Activated B cell treated with CpG ODN at 0.5 μM for 24 hours (primary cell): ENCODE measurements at regions of chr7 and their contacts with region 1.

Region 1: DNA sequence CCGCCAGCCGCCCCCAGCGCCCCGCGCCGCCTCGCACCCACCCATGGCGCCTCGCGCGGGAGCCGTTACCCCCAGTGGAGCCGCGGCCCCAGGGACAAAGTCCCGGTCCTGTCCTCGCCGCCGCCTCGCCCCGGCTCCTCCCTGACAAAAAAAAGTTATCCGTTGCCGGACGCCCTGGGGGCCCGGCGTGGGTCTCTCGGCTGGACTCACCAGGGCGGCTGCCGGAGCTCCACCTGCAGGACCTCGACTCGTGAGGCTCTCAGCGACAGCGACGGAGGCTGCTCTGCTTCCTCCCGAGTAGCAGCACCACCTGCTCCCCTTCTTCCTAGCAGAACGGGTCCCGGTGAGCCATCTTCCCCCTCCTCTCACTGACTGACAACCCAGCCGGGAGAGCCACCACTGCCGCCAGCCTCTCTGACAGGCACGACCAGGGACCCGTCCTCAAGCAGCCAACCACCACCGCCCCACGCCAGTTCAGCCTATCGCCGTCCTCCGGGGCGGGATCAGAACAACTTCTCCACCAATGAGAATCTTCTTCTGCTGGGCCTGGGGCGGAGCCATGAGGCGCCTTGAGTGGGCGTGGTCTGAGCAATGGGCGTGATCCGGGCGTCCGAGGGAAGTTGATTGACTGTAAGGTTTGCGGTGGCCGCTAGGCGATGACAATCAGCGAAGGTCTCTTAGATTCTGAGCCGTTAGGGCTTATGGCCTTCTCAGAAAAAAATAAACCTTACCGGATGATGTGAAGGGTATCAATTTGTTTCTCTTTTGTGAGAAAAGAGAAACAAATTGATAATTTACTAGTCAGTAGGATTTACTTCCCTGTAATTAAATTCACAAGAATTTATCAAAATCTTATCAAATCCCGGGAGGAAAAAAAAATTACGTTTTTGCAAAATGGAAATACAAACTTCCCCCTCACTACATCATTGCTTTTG is at the start of gene HYCC1:
- DNase-seq: peak; percentile 95
- ATAC-seq: peak; percentile 96
- H3K4me3 Mint-ChIP-seq: peak within 1 kb of the TSS; percentile 99
- H3K27ac Mint-ChIP-seq: peak within 1 kb of the TSS; percentile 93
- H3K4me1 Mint-ChIP-seq: peaks cover 44% of the 10 kb centered on the region
- H3K27me3 Mint-ChIP-seq: no peaks in the 10 kb centered on the region
- CTCF ChIP-seq: no peak
- total RNA-seq, gene HYCC1: 39.9 and 41.9 TPM in 2 replicates

Region 2: DNA sequence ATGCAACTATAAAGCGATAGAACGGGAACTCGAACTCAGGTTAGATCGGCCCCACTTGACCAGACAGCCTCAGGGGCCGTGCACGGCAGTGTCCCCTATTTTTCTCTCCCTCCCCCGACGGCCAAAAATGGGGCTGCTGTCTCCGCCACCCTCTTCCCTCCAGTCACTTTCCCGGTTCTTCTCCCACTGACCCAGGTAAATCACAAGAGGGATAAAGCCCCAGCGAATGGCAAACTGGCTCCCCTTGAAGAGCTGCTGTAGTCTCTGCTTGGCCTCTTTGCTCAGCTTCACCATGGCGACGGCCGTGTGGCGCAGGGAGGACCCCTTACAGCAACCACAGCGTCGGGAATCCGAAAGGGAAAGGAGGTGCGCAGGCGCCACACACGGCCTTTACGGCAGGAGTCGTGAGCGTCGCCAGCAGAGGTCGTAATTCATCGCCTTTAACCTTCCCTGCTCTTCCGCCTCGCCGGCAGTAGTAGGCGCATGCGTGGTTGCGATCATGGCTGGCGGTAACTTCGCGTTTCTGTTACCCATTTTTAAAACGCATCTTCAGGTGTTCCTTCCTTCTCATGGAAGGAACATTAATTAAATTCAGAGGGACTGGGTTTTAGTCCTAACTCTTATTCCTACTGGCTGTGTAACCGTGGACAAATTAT is 191.4 kb before region 1 on chr7 and contains the start of gene TOMM7:
- CTCF ChIA-PET with region 1: no interaction called
- POLR2A ChIA-PET with region 1: no interaction called
- intact Hi-C with region 1: loop called (anchors 2 kb)
- DNase-seq: peak; percentile 66
- ATAC-seq: peak; percentile 99
- H3K4me3 Mint-ChIP-seq: peak within 1 kb of the TSS; percentile 99
- H3K27ac Mint-ChIP-seq: peak within 1 kb of the TSS; percentile 91
- H3K4me1 Mint-ChIP-seq: peaks cover 39% of the 10 kb centered on the region
- H3K27me3 Mint-ChIP-seq: peaks cover 11% of the 10 kb centered on the region
- CTCF ChIP-seq: no peak
- total RNA-seq, gene TOMM7: 324 and 406 TPM in 2 replicates

Region 3: GRCh38 chr7:22872096-22872807 is 141.7 kb before region 1 on chr7:
- CTCF ChIA-PET with region 1: no interaction called
- POLR2A ChIA-PET with region 1: no interaction called
- intact Hi-C with region 1: loop called (anchors 5 kb)
- DNase-seq: peak; percentile 21
- ATAC-seq: peak; percentile 94
- H3K4me3 Mint-ChIP-seq: peak overlapping the region; percentile 77
- H3K27ac Mint-ChIP-seq: peak overlapping the region; percentile 32
- H3K4me1 Mint-ChIP-seq: peaks cover 35% of the 10 kb centered on the region
- H3K27me3 Mint-ChIP-seq: no peaks in the 10 kb centered on the region
- CTCF ChIP-seq: no peak

Region 4: GRCh38 chr7:22911889-22912288 is 102.1 kb before region 1 on chr7:
- CTCF ChIA-PET with region 1: no interaction called
- POLR2A ChIA-PET with region 1: no interaction called
- intact Hi-C with region 1: no loop called
- DNase-seq: no peak
- ATAC-seq: no peak
- H3K4me3 Mint-ChIP-seq: no peak overlapping the region
- H3K27ac Mint-ChIP-seq: no peak overlapping the region
- H3K4me1 Mint-ChIP-seq: no peaks in the 10 kb centered on the region
- H3K27me3 Mint-ChIP-seq: no peaks in the 10 kb centered on the region
- CTCF ChIP-seq: no peak

Region 5: DNA sequence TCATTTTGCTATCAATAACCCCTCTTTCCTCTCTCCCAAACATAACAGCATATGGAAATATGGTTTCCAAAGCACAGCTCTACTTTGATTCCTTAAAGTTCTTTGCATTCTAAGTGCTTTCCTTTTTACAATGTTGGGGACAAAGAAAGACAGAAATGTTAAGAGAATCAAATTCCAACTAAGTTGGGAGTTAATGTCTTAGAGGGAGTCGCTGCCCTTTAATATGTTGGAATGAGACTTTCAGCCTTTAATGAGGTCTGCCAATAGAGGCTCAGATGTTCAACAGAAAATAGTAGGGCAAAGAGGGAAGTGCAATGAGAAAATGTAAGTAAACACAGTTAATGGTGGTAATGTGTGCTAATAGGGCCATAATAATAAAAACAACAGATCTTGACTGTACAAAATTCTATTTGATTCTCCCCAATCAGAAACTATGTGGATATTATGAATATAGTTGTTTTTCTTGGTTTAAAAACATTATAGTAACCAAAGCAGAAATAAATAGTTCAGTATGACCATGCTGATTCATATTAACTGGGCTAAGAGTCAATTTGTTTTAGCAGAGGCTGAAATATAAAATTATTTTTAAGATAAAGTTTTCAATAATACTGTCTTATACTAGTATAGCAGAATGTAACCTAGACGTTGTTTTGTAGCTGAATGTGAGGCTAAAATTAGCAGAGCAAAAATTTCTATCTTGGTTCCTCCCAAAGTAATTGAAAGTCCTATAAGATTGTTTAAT is 10.3 kb before region 1 on chr7:
- CTCF ChIA-PET with region 1: no interaction called
- POLR2A ChIA-PET with region 1: interaction called, 4 read pairs
- intact Hi-C with region 1: loop called (anchors 1 kb)
- DNase-seq: no peak
- ATAC-seq: no peak
- H3K4me3 Mint-ChIP-seq: no peak overlapping the region
- H3K27ac Mint-ChIP-seq: no peak overlapping the region
- H3K4me1 Mint-ChIP-seq: peaks cover 58% of the 10 kb centered on the region
- H3K27me3 Mint-ChIP-seq: no peaks in the 10 kb centered on the region
- CTCF ChIP-seq: no peak

Region 6: GRCh38 chr7:23055582-23056178 is 41.7 kb after region 1 on chr7:
- CTCF ChIA-PET with region 1: interaction called, 18 read pairs
- POLR2A ChIA-PET with region 1: no interaction called
- intact Hi-C with region 1: loop called (anchors 1 kb)
- DNase-seq: no peak
- ATAC-seq: peak; percentile 99
- H3K4me3 Mint-ChIP-seq: no peak overlapping the region
- H3K27ac Mint-ChIP-seq: no peak overlapping the region
- H3K4me1 Mint-ChIP-seq: no peaks in the 10 kb centered on the region
- H3K27me3 Mint-ChIP-seq: no peaks in the 10 kb centered on the region
- CTCF ChIP-seq: peak; percentile 80

Region 7: DNA sequence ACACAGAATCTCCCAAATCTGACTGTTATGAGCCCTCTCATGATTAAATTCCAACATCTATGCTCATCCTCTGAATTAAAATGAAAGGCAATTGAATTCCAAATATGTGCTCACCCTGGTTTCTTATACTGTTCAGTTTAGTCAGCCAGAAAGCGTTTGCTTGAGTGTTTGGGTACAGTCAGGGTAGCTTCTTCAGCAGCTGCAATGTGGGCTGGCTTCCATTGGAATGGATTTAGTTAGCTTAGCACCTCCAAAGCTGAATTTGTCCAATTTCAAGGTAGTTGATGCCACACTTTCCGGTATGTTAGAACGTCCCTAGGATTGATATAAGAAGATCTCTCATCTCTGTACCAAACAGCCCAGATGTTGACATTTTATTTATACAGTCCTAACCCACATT is 100.9 kb after region 1 on chr7:
- CTCF ChIA-PET with region 1: no interaction called
- POLR2A ChIA-PET with region 1: no interaction called
- intact Hi-C with region 1: no loop called
- DNase-seq: no peak
- ATAC-seq: no peak
- H3K4me3 Mint-ChIP-seq: no peak overlapping the region
- H3K27ac Mint-ChIP-seq: no peak overlapping the region
- H3K4me1 Mint-ChIP-seq: no peaks in the 10 kb centered on the region
- H3K27me3 Mint-ChIP-seq: no peaks in the 10 kb centered on the region
- CTCF ChIP-seq: no peak

Region 8: DNA sequence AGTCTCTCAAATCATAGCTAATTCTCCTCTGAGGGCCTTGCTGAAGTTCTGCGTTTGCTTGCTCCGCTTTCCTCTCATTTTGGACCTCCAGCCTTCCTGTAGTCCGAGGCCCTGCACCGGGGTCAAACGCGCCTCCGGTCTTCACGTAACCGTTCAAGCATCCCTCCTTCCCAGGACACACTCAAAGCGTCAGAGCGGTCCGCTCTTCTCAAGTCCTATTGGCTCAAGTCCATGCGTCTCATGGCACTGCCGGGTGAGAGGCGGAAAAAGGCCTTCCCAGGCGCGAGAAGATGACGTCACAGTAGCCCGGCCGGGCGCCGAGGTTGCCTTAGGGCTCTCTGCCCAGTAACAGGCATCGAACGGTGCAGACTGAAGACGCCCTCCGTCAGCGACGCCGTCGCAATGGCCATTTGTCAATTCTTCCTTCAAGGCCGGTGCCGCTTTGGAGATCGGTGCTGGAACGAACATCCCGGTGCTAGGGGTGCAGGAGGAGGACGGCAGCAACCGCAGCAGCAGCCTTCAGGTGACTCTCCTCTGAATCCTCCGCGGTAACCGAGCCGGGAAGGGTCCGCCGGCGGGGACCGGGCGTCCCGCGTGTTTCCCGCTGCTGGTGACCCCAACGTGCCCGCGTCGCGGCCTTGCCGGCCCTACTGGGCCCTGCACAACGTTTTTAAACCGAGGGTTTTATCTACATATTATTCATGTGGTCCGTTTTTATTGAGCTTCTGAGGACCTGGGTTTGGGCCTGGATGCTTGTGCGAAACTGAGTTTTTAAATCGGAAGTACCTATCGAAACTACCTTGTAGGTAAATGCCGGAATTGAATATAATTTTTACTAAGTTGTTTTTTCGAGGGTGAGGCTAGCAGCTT is 167.9 kb after region 1 on chr7 and contains the start of gene NUP42:
- CTCF ChIA-PET with region 1: no interaction called
- POLR2A ChIA-PET with region 1: interaction called, 3 read pairs
- intact Hi-C with region 1: loop called (anchors 1 kb)
- DNase-seq: peak; percentile 90
- ATAC-seq: peak; percentile 90
- H3K4me3 Mint-ChIP-seq: peak within 1 kb of the TSS; percentile 94
- H3K27ac Mint-ChIP-seq: peak within 1 kb of the TSS; percentile 100
- H3K4me1 Mint-ChIP-seq: peaks cover 28% of the 10 kb centered on the region
- H3K27me3 Mint-ChIP-seq: no peaks in the 10 kb centered on the region
- CTCF ChIP-seq: no peak
- total RNA-seq, gene NUP42: 39.2 and 50.6 TPM in 2 replicates

Region 9: GRCh38 chr7:23531794-23532489 is 518.0 kb after region 1 on chr7 and contains the start of gene TRA2A:
- CTCF ChIA-PET with region 1: no interaction called
- POLR2A ChIA-PET with region 1: no interaction called
- intact Hi-C with region 1: loop called (anchors 10 kb)
- DNase-seq: peak; percentile 97
- ATAC-seq: peak; percentile 89
- H3K4me3 Mint-ChIP-seq: peak within 1 kb of the TSS; percentile 99
- H3K27ac Mint-ChIP-seq: peak within 1 kb of the TSS; percentile 100
- H3K4me1 Mint-ChIP-seq: peaks cover 49% of the 10 kb centered on the region
- H3K27me3 Mint-ChIP-seq: no peaks in the 10 kb centered on the region
- CTCF ChIP-seq: no peak
- total RNA-seq, gene TRA2A: 123 and 144 TPM in 2 replicates